CD4-positive, alpha-beta memory T cell (primary cell): ENCODE measurements at regions of chr11 and their contacts with region 1.

Region 1: GRCh38 chr11:121643535-121644512 is 191.1 kb upstream of the SORL1-AS1 start:
- DNase-seq: no peak
- H3K4me3 ChIP-seq: no peak overlapping the region
- H3K4me3 Mint-ChIP-seq: no peak overlapping the region
- H3K27ac ChIP-seq: no peak overlapping the region
- H3K27ac Mint-ChIP-seq: peak overlapping the region in 1 of 7 donors; percentile 60
- H3K4me1 ChIP-seq: no peaks in the 10 kb centered on the region
- H3K4me1 Mint-ChIP-seq: peaks cover 0 to 9% (median 2%) of the 10 kb centered on the region in 4 donors
- H3K27me3 ChIP-seq: no peaks in the 10 kb centered on the region
- H3K27me3 Mint-ChIP-seq: no peaks in the 10 kb centered on the region

Region 2: GRCh38 chr11:121563900-121564822 is 79.7 kb before region 1 on chr11:
- CTCF ChIA-PET with region 1: no interaction called
- POLR2A ChIA-PET with region 1: no interaction called
- intact Hi-C with region 1: no loop called
- DNase-seq: no peak
- H3K4me3 ChIP-seq: no peak overlapping the region
- H3K4me3 Mint-ChIP-seq: peak overlapping the region in 1 of 8 donors; percentile 0
- H3K27ac ChIP-seq: no peak overlapping the region
- H3K27ac Mint-ChIP-seq: peak overlapping the region in 5 of 7 donors; percentile 8 to 89 (median 51)
- H3K4me1 ChIP-seq: no peaks in the 10 kb centered on the region
- H3K4me1 Mint-ChIP-seq: peaks cover 12 to 40% (median 20%) of the 10 kb centered on the region in 4 donors
- H3K27me3 ChIP-seq: no peaks in the 10 kb centered on the region
- H3K27me3 Mint-ChIP-seq: no peaks in the 10 kb centered on the region

Region 3: GRCh38 chr11:121655537-121656327 is 11.9 kb after region 1 on chr11:
- CTCF ChIA-PET with region 1: interaction called, 20 read pairs
- POLR2A ChIA-PET with region 1: interaction called, 3 read pairs
- intact Hi-C with region 1: no loop called
- DNase-seq: peak; percentile 53 to 60 (median 56)
- H3K4me3 ChIP-seq: peak overlapping the region; percentile 49 to 54
- H3K4me3 Mint-ChIP-seq: peak overlapping the region; percentile 76 to 91 (median 87)
- H3K27ac ChIP-seq: peak overlapping the region; percentile 23
- H3K27ac Mint-ChIP-seq: peak overlapping the region; percentile 1 to 89 (median 68)
- H3K4me1 ChIP-seq: peaks cover 16% of the 10 kb centered on the region
- H3K4me1 Mint-ChIP-seq: peaks cover 13 to 35% (median 23%) of the 10 kb centered on the region in 4 donors
- H3K27me3 ChIP-seq: no peaks in the 10 kb centered on the region
- H3K27me3 Mint-ChIP-seq: no peaks in the 10 kb centered on the region